Gastrocnemius medialis (tissue), 4 donors: ENCODE measurements at regions of chr15 and their contacts with region 1.

Region 1: GRCh38 chr15:100515758-100516157 is 13.0 kb downstream of the CERS3 start:
- DNase-seq: peak; percentile 69 to 78
- ATAC-seq: peak; percentile 34 to 63
- H3K4me3 ChIP-seq: no peak overlapping the region
- H3K27ac ChIP-seq: peak overlapping the region; percentile 91 to 96 (median 94)
- H3K4me1 ChIP-seq: peaks cover 35 to 46% of the 10 kb centered on the region in 2 donors
- H3K27me3 ChIP-seq: no peaks in the 10 kb centered on the region
- CTCF ChIP-seq: no peak
- POLR2A ChIP-seq: peak in 1 of 2 donors; percentile 19

Region 2: GRCh38 chr15:100033140-100033857 is 482.5 kb before region 1 on chr15:
- in situ Hi-C with region 1: no loop called
- intact Hi-C with region 1: no loop called
- DNase-seq: no peak
- ATAC-seq: peak; percentile 64 to 75
- H3K4me3 ChIP-seq: no peak overlapping the region
- H3K27ac ChIP-seq: peak overlapping the region in 1 of 4 donors; percentile 41
- H3K4me1 ChIP-seq: peaks cover 0 to 9% of the 10 kb centered on the region in 2 donors
- H3K27me3 ChIP-seq: no peaks in the 10 kb centered on the region
- CTCF ChIP-seq: no peak
- POLR2A ChIP-seq: no peak

Region 3: GRCh38 chr15:100433300-100433699 is 82.5 kb before region 1 on chr15:
- in situ Hi-C with region 1: no loop called
- intact Hi-C with region 1: loop called (anchors 5 kb)
- DNase-seq: no peak
- ATAC-seq: no peak
- H3K4me3 ChIP-seq: no peak overlapping the region
- H3K27ac ChIP-seq: no peak overlapping the region
- H3K4me1 ChIP-seq: peaks cover 12 to 16% of the 10 kb centered on the region in 2 donors
- H3K27me3 ChIP-seq: no peaks in the 10 kb centered on the region
- CTCF ChIP-seq: no peak
- POLR2A ChIP-seq: no peak

Region 4: GRCh38 chr15:100466073-100466472 is 49.7 kb before region 1 on chr15:
- in situ Hi-C with region 1: no loop called
- intact Hi-C with region 1: loop called (anchors 2 kb)
- DNase-seq: no peak
- ATAC-seq: peak; percentile 63 to 75
- H3K4me3 ChIP-seq: no peak overlapping the region
- H3K27ac ChIP-seq: peak overlapping the region in 1 of 4 donors; percentile 44
- H3K4me1 ChIP-seq: peaks cover 10 to 17% of the 10 kb centered on the region in 2 donors
- H3K27me3 ChIP-seq: no peaks in the 10 kb centered on the region
- CTCF ChIP-seq: no peak
- POLR2A ChIP-seq: no peak

Region 5: DNA sequence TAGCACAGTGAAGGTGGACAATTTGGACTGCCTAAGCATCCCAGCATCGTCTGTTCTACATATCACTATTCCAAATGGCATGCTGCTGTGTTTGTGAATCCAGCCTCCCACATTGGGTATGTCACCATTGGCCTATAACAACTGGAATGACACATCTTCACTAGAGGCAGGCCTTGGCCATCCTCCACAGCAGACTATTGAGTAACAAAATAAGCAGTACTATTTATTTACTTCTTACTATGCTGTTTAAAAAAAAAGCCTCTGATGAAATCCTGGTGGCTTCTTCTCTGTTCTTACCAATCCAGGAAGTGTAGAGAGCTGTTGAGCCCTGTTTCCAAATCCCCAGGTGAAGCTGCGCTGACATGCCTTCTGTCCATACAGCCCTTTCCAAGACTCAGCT is 43.6 kb after region 1 on chr15:
- in situ Hi-C with region 1: no loop called
- intact Hi-C with region 1: loop called (anchors 2 kb)
- DNase-seq: peak; percentile 77 to 78
- ATAC-seq: peak; percentile 99
- H3K4me3 ChIP-seq: no peak overlapping the region
- H3K27ac ChIP-seq: peak overlapping the region; percentile 5 to 71 (median 61)
- H3K4me1 ChIP-seq: peaks cover 0 to 11% of the 10 kb centered on the region in 2 donors
- H3K27me3 ChIP-seq: no peaks in the 10 kb centered on the region
- CTCF ChIP-seq: no peak
- POLR2A ChIP-seq: no peak

Region 6: GRCh38 chr15:100602064-100602822 is 86.5 kb after region 1 on chr15 and contains the starts of genes ASB7 and LINS1:
- in situ Hi-C with region 1: no loop called
- intact Hi-C with region 1: loop called (anchors 5 kb)
- DNase-seq: peak; percentile 100
- ATAC-seq: peak; percentile 96 to 97
- H3K4me3 ChIP-seq: peak within 1 kb of the TSS; percentile 82 to 98 (median 96)
- H3K27ac ChIP-seq: peak within 1 kb of the TSS; percentile 85 to 94 (median 92)
- H3K4me1 ChIP-seq: peaks cover 32 to 44% of the 10 kb centered on the region in 2 donors
- H3K27me3 ChIP-seq: no peaks in the 10 kb centered on the region
- CTCF ChIP-seq: no peak
- POLR2A ChIP-seq: peak; percentile 35 to 49
- total RNA-seq, gene ASB7: 5.1 to 10.3 (median 6.3) TPM
- total RNA-seq, gene LINS1: 3.2 to 11.9 (median 10.3) TPM

Region 7: DNA sequence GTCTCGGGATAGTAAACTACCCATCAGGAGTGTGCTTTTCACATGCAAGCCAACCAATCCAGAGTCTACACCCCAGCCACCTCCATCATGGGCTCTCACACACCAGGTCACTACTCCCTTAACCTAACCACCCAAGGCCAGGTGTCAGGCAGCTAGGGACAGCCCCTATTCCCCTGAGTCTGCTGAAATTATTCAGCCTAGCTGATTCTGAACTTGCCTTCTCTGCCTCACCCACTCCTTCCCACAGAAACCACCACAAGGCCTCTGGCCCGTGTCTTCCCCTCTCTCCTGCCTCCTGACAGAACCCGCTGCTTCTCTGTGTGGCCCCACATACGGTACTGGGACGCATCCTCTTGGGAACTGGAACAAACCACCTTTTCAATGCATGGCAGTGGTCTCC is 891.7 kb after region 1 on chr15:
- in situ Hi-C with region 1: no loop called
- intact Hi-C with region 1: no loop called
- DNase-seq: no peak
- ATAC-seq: no peak
- H3K4me3 ChIP-seq: no peak overlapping the region
- H3K27ac ChIP-seq: no peak overlapping the region
- H3K4me1 ChIP-seq: no peaks in the 10 kb centered on the region
- H3K27me3 ChIP-seq: no peaks in the 10 kb centered on the region
- CTCF ChIP-seq: no peak
- POLR2A ChIP-seq: no peak